GM18951 (cell line): ENCODE measurements at regions of chr12 and their contacts with region 1.

Region 1: GRCh38 chr12:749751-750270 is 2.6 kb upstream of the WNK1 start:
- POLR2A ChIP-seq: no peak

Region 2: GRCh38 chr12:674272-674781 is 75.5 kb before region 1 on chr12:
- in situ Hi-C with region 1: loop called (anchors 10 kb)
- POLR2A ChIP-seq: peak; percentile 60